ENCODE measurements at regions of chr9 and their contacts with region 1.

Region 1: DNA sequence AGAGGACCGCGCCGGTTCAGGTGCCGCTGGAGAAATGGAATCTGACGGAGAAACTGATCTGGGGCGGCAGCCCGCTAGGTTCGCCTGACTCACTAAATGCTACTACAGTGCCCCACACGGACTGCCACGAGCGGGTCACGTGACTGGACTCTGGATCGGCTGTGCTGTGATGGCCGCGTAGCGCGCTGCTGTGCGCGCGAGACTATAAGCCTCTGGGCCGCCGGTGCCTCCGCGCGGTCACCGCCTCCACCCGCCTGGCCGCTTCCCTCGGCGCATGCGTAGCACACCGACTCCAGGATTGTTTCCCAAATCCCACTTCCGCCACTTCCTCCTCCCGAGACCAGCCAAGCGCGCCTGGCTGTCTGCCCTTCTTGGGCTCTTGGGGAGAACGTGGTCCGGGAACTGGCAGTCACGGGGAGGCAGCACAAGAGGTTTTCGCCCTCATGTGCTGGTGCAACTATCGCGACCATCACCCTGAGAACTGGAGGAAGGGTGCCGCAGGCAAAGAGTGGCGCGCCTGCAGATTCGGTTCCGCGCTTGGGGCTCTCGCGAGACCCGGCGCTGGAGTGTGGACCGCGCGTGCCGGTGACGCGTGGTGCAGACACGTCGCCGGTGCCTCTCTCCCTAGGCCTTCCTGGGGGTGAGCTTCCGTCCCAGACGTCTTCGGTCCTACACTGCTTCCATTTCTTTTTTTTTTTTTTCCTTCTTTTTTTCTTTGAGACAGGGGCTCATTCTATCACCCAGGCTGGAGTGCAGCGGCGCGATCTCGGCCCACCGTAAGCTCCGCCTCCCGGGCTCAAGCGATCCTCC is 35.8 kb upstream of the GLDC start:
- DNase-seq: peak; percentile 77 to 96 (median 89)
- ATAC-seq: peak; percentile 85
- H3K4me3 ChIP-seq: peak overlapping the region; percentile 84 to 97
- H3K4me3 Mint-ChIP-seq: peak overlapping the region; percentile 93
- H3K27ac ChIP-seq: peak overlapping the region; percentile 94 to 96
- H3K27ac Mint-ChIP-seq: peak overlapping the region; percentile 98
- H3K4me1 ChIP-seq: peaks cover 11% of the 10 kb centered on the region
- H3K4me1 Mint-ChIP-seq: peaks cover 22% of the 10 kb centered on the region
- H3K27me3 ChIP-seq: no peaks in the 10 kb centered on the region
- H3K27me3 Mint-ChIP-seq: no peaks in the 10 kb centered on the region
- CTCF ChIP-seq: no peak

Region 2: GRCh38 chr9:5843794-5844504 is 837.4 kb before region 1 on chr9:
- CTCF ChIA-PET with region 1: no interaction called
- POLR2A ChIA-PET with region 1: no interaction called
- intact Hi-C with region 1: loop called in 1 of 2 experiments (anchors 5 kb)
- DNase-seq: peak in 1 of 9 experiments; percentile 35
- ATAC-seq: no peak
- H3K4me3 ChIP-seq: peak overlapping the region in 1 of 2 experiments; percentile 24
- H3K4me3 Mint-ChIP-seq: peak overlapping the region; percentile 65
- H3K27ac ChIP-seq: peak overlapping the region in 1 of 2 experiments; percentile 61
- H3K27ac Mint-ChIP-seq: peak overlapping the region; percentile 84
- H3K4me1 ChIP-seq: peaks cover 53% of the 10 kb centered on the region
- H3K4me1 Mint-ChIP-seq: peaks cover 63% of the 10 kb centered on the region
- H3K27me3 ChIP-seq: no peaks in the 10 kb centered on the region
- H3K27me3 Mint-ChIP-seq: no peaks in the 10 kb centered on the region
- CTCF ChIP-seq: no peak

Region 3: GRCh38 chr9:6068983-6069382 is 612.4 kb before region 1 on chr9:
- CTCF ChIA-PET with region 1: no interaction called
- POLR2A ChIA-PET with region 1: interaction called, 3 read pairs
- intact Hi-C with region 1: loop called in 1 of 2 experiments (anchors 10 kb)
- DNase-seq: peak in 3 of 9 experiments; percentile 30 to 86 (median 69)
- ATAC-seq: peak; percentile 96
- H3K4me3 ChIP-seq: peak overlapping the region in 1 of 2 experiments; percentile 9
- H3K4me3 Mint-ChIP-seq: peak overlapping the region; percentile 71
- H3K27ac ChIP-seq: peak overlapping the region; percentile 25 to 74
- H3K27ac Mint-ChIP-seq: peak overlapping the region; percentile 86
- H3K4me1 ChIP-seq: peaks cover 16% of the 10 kb centered on the region
- H3K4me1 Mint-ChIP-seq: peaks cover 18% of the 10 kb centered on the region
- H3K27me3 ChIP-seq: no peaks in the 10 kb centered on the region
- H3K27me3 Mint-ChIP-seq: no peaks in the 10 kb centered on the region
- CTCF ChIP-seq: no peak

Region 4: GRCh38 chr9:6715755-6716643 is 34.6 kb after region 1 on chr9:
- CTCF ChIA-PET with region 1: interaction called, 6 read pairs
- POLR2A ChIA-PET with region 1: interaction called, 17 read pairs
- intact Hi-C with region 1: loop called in 1 of 2 experiments (anchors 1 kb)
- DNase-seq: peak; percentile 41 to 86 (median 69)
- ATAC-seq: peak; percentile 85
- H3K4me3 ChIP-seq: peak overlapping the region; percentile 44 to 71
- H3K4me3 Mint-ChIP-seq: peak overlapping the region; percentile 88
- H3K27ac ChIP-seq: peak overlapping the region; percentile 25 to 72
- H3K27ac Mint-ChIP-seq: peak overlapping the region; percentile 88
- H3K4me1 ChIP-seq: no peaks in the 10 kb centered on the region
- H3K4me1 Mint-ChIP-seq: peaks cover 11% of the 10 kb centered on the region
- H3K27me3 ChIP-seq: no peaks in the 10 kb centered on the region
- H3K27me3 Mint-ChIP-seq: no peaks in the 10 kb centered on the region
- CTCF ChIP-seq: no peak

Region 5: DNA sequence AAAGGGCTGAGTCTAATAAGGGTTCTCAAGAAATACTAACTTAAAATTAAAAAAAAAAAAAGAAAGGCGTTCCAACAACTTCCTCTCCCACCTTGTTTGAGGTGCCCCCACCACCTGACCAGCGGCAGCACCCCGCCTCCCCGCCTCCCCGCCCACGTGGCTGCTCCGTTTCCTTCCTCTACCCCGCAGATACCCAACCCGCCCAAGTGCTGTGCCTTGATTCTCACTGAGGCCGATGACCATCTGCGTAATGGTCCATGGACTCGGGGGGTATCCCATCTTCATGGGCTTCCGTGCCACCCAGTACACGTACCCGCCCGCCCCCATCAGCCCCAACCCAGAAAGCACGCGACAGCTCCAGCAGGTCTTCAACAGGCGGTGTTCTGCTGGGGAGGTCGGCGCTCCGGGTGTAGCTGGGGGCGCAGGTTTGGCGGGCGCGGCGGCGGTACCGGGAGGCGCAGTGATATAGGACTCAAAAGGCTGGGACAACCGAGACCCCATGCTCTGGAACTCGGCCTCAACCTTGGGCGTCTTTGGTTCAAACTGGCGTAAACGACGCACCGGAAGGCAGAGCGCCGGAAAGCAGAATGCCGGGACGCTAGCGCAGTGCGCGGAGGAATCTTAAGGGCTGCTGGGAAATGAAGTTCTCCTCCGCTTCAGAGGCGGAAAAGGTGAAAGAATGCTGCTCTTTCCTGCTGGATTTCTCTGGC is 1118.0 kb after region 1 on chr9 and contains the start of gene DMAC1:
- CTCF ChIA-PET with region 1: no interaction called
- POLR2A ChIA-PET with region 1: no interaction called
- intact Hi-C with region 1: loop called in 1 of 2 experiments (anchors 2 kb)
- DNase-seq: peak; percentile 44 to 87 (median 75)
- ATAC-seq: peak; percentile 90
- H3K4me3 ChIP-seq: peak within 1 kb of the TSS; percentile 89 to 100
- H3K4me3 Mint-ChIP-seq: peak within 1 kb of the TSS; percentile 95
- H3K27ac ChIP-seq: peak within 1 kb of the TSS; percentile 88 to 89
- H3K27ac Mint-ChIP-seq: peak within 1 kb of the TSS; percentile 97
- H3K4me1 ChIP-seq: peaks cover 16% of the 10 kb centered on the region
- H3K4me1 Mint-ChIP-seq: peaks cover 40% of the 10 kb centered on the region
- H3K27me3 ChIP-seq: no peaks in the 10 kb centered on the region
- H3K27me3 Mint-ChIP-seq: no peaks in the 10 kb centered on the region
- CTCF ChIP-seq: no peak
- total RNA-seq, gene DMAC1: 8.6 to 10.6 TPM

Measured in CD8-positive, alpha-beta T cell (primary cell).